Activated naive CD4-positive, alpha-beta T cell treated with anti-CD3 and anti-CD28 coated beads for 36 hours (primary cell): ENCODE measurements at regions of chr5 and their contacts with region 1.

Region 1: DNA sequence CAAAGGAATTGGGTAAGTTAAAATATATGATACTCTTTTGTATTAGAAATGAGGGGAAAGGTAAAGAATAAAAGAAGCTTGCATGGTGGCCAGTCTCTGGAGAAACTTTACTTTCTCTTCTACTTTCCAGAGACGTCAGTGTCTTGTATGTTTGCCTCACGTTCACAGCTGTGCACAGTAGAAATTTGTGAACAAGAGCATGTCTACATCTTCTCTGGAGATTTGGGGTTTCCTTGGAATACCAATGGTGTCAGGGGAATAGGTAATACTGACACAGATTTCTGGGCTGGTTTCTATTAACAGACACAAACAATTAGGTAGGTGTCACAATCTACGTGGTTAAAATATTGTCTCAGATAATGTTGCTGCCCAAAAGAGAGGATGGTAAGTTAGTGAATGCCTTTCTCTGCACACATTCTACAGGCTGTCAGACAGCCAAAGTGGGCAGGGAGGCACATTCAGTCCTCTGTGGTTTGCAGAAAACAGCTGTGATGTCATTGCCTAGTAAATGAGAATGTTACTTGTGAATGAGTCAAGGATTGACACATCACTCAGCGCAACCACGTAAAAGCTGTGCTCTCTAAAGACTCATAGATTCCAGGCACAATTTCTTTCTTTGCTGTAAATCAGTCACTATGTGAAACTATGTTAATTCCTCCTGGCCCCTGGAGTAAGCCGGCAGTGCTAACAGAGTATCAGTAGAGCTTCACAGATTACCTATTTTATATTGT is 397.1 kb downstream of the MAN2A1 start:
- DNase-seq: peak; percentile 89
- H3K4me3 Mint-ChIP-seq: peak overlapping the region; percentile 64
- H3K27ac Mint-ChIP-seq: peak overlapping the region; percentile 95
- H3K4me1 Mint-ChIP-seq: peaks cover 58% of the 10 kb centered on the region
- H3K27me3 Mint-ChIP-seq: no peaks in the 10 kb centered on the region

Region 2: GRCh38 chr5:108748401-108749127 is 1338.3 kb before region 1 on chr5:
- CTCF ChIA-PET with region 1: no interaction called
- intact Hi-C with region 1: loop called (anchors 5 kb)
- DNase-seq: peak; percentile 98
- H3K4me3 Mint-ChIP-seq: peak overlapping the region; percentile 85
- H3K27ac Mint-ChIP-seq: peak overlapping the region; percentile 88
- H3K4me1 Mint-ChIP-seq: peaks cover 17% of the 10 kb centered on the region
- H3K27me3 Mint-ChIP-seq: no peaks in the 10 kb centered on the region

Region 3: DNA sequence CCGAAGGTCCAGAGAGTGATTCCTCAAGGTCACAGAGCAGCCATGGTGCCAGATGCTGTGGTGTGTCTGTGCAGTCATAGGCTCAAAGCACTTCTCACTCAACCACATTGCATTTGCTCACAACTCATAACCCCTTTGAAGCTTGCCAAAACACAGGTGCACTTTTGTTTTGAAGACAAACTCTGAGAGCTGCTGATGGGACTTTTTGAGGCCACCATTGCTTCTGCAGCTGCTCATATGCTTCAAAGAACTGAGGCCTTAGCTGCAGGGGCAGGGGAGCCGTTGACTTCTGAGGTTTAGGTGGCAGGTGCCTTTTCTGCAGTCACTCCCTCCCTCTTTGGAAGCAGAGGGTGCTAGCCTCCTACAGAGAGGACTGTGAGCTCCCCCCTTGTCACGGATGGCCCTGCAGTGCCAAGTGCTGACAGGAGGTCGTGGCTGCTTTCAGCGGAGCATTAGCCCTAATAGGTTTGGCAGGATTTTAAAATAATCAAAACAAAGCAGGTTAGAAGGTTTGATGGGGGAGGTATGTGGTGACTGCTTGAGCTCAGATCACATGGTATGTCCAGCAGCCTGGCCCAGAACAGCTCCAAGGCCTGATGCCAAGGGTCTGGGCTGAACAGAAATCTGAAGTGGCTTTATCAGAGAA is 165.0 kb before region 1 on chr5:
- CTCF ChIA-PET with region 1: no interaction called
- intact Hi-C with region 1: loop called (anchors 1 kb)
- DNase-seq: peak; percentile 84
- H3K4me3 Mint-ChIP-seq: peak overlapping the region; percentile 55
- H3K27ac Mint-ChIP-seq: peak overlapping the region; percentile 93
- H3K4me1 Mint-ChIP-seq: peaks cover 35% of the 10 kb centered on the region
- H3K27me3 Mint-ChIP-seq: no peaks in the 10 kb centered on the region

Region 4: DNA sequence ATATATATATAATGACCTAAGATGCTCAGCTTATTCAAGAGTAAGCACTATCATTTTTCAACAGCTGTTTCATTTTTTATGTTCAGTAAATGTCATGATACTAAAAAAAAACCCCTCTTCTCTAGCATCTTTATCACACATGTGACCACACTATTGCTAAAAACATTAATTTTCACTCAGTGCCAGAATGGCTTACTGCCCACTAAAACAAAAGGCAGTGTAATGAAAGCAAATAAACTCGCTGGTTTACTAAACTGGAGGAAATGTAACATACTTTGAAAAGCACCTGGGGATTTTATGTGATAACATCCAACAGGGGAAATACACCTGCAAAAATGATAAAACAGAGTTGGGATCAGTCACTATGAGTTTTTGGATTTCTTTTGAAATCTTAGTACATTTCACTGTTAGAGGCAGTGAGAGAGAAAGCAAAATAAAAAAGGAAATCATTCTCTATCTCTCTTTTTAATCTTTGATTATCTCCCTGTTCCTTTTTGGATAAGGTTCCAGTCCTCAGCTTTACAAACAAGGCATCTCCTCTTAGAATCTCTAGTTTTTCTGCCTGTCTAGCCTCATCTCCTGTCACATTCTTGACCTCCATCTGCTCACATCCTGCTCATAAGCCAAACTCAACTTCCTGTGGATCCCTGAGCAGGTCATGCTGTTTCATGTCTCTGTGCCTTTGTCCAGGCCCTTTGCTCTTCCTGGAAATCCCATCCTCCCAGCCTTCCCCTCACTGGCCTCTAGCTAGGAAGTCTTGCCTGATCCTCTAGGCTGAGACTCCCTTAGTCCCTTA is 59.1 kb before region 1 on chr5:
- CTCF ChIA-PET with region 1: no interaction called
- intact Hi-C with region 1: loop called (anchors 1 kb)
- DNase-seq: no peak
- H3K4me3 Mint-ChIP-seq: no peak overlapping the region
- H3K27ac Mint-ChIP-seq: peak overlapping the region; percentile 61
- H3K4me1 Mint-ChIP-seq: peaks cover 30% of the 10 kb centered on the region
- H3K27me3 Mint-ChIP-seq: no peaks in the 10 kb centered on the region

Region 5: GRCh38 chr5:110063640-110064602 is 22.9 kb before region 1 on chr5:
- CTCF ChIA-PET with region 1: interaction called, 3 read pairs
- intact Hi-C with region 1: loop called (anchors 1 kb)
- DNase-seq: no peak
- H3K4me3 Mint-ChIP-seq: no peak overlapping the region
- H3K27ac Mint-ChIP-seq: no peak overlapping the region
- H3K4me1 Mint-ChIP-seq: peaks cover 25% of the 10 kb centered on the region
- H3K27me3 Mint-ChIP-seq: no peaks in the 10 kb centered on the region

Region 6: GRCh38 chr5:110269478-110270142 is 182.8 kb after region 1 on chr5:
- CTCF ChIA-PET with region 1: no interaction called
- intact Hi-C with region 1: loop called (anchors 1 kb)
- DNase-seq: no peak
- H3K4me3 Mint-ChIP-seq: peak overlapping the region; percentile 3
- H3K27ac Mint-ChIP-seq: peak overlapping the region; percentile 73
- H3K4me1 Mint-ChIP-seq: peaks cover 12% of the 10 kb centered on the region
- H3K27me3 Mint-ChIP-seq: no peaks in the 10 kb centered on the region

Region 7: GRCh38 chr5:110288766-110289511 is 202.1 kb after region 1 on chr5:
- CTCF ChIA-PET with region 1: no interaction called
- intact Hi-C with region 1: no loop called
- DNase-seq: no peak
- H3K4me3 Mint-ChIP-seq: no peak overlapping the region
- H3K27ac Mint-ChIP-seq: no peak overlapping the region
- H3K4me1 Mint-ChIP-seq: peaks cover 2% of the 10 kb centered on the region
- H3K27me3 Mint-ChIP-seq: no peaks in the 10 kb centered on the region

Region 8: GRCh38 chr5:110439296-110439695 is 352.5 kb after region 1 on chr5:
- CTCF ChIA-PET with region 1: no interaction called
- intact Hi-C with region 1: no loop called
- DNase-seq: no peak
- H3K4me3 Mint-ChIP-seq: no peak overlapping the region
- H3K27ac Mint-ChIP-seq: no peak overlapping the region
- H3K4me1 Mint-ChIP-seq: no peaks in the 10 kb centered on the region
- H3K27me3 Mint-ChIP-seq: peaks cover 6% of the 10 kb centered on the region

Region 9: DNA sequence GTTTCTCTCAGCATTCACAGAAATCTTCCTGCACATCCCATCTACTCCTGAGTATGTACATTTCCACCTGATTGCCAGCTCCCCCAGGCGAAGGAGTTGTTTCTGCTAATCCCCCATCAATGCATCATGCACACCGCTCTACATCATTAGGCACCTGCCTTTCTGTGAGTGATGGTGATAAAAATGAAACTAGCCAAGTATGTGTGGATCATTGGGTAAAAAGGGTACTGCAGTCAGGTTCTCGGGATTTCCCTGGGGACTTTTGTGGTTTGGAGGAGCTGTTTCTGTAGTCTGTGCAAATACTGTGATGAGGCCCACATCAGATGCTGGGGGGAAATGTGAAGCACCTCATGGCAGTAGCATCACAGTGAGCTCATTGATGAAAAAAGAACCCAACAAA is 1167.8 kb after region 1 on chr5:
- CTCF ChIA-PET with region 1: no interaction called
- intact Hi-C with region 1: loop called (anchors 5 kb)
- DNase-seq: peak; percentile 95
- H3K4me3 Mint-ChIP-seq: peak overlapping the region; percentile 46
- H3K27ac Mint-ChIP-seq: peak overlapping the region; percentile 90
- H3K4me1 Mint-ChIP-seq: peaks cover 78% of the 10 kb centered on the region
- H3K27me3 Mint-ChIP-seq: no peaks in the 10 kb centered on the region